Activated B cell treated with CpG ODN at 0.5 μM for 24 hours (primary cell): ENCODE measurements at regions of chr19 and their contacts with region 1.

Region 1: DNA sequence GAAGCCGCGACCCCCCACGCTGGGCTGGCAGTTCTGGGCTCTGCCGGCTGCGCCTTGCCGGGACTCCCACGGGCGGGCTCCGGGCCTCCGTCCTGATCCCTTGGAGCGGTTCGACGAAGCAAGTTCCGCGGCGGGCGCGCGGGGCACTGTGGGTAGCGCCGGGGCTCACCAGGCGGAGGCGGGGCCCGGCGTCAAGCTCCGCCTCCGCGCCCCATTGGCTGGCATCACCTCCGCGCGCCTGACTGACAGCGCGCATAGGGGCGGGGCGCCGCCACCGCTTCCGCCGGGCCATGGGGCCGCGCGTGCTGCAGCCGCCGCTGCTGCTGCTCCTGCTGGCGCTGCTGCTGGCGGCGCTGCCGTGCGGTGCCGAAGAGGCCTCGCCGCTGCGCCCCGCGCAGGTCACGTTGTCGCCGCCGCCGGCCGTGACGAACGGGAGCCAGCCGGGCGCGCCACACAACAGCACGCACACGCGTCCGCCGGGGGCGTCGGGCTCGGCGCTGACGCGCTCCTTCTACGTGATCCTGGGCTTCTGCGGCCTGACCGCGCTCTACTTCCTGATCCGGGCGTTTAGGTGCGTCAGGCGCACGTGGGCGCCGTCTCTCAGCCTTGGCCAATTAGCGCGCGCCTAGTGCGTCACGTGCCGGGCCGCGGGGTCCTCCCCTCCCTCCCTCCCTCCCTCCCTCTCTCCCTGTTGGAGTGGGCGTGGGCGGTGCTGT is at the start of gene FAM174C:
- DNase-seq: peak; percentile 87
- ATAC-seq: peak; percentile 83
- H3K4me3 Mint-ChIP-seq: peak within 1 kb of the TSS; percentile 84
- H3K27ac Mint-ChIP-seq: peak within 1 kb of the TSS; percentile 88
- H3K4me1 Mint-ChIP-seq: peaks cover 51% of the 10 kb centered on the region
- H3K27me3 Mint-ChIP-seq: no peaks in the 10 kb centered on the region
- CTCF ChIP-seq: no peak
- total RNA-seq, gene FAM174C: 47.9 and 52.0 TPM in 2 replicates

Region 2: DNA sequence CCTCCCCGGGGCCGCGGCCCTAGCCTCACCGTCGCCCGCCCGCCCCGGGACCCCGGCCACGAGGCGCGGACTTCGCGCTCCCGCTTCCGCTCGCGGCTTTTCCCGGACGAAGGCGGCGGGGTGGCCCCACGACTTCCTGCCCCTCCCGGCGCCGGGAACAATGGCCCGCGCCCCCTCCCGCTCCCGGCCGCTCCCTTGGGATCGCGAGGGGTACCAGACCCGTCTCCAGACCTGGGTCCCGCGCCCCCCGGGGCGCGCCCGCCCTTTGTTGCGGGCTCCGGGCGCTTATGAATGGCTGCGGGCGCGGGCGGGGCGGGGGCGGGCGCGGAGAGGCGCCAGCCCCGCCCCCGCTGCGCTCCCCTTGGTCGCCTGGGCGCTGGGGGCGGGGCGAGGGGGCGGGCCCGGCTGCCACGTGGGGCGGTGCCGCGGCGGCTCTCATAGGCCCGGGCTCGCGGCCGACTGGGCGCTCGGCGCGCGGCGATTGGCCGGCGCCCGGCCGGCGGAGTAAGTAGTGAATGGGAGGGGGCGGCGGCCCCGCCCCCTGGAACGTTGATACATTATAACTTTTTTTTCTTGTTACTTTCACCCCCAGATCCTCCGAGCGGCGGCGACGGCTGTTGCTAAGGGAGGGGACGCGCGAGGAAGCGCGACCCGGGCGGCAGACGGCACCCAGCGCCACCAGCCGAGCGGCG is 26.0 kb before region 1 on chr19:
- CTCF ChIA-PET with region 1: interaction called, 19 read pairs
- POLR2A ChIA-PET with region 1: interaction called, 33 read pairs
- intact Hi-C with region 1: no loop called
- DNase-seq: peak; percentile 84
- ATAC-seq: peak; percentile 49
- H3K4me3 Mint-ChIP-seq: peak overlapping the region; percentile 80
- H3K27ac Mint-ChIP-seq: peak overlapping the region; percentile 81
- H3K4me1 Mint-ChIP-seq: peaks cover 31% of the 10 kb centered on the region
- H3K27me3 Mint-ChIP-seq: no peaks in the 10 kb centered on the region
- CTCF ChIP-seq: no peak

Region 3: GRCh38 chr19:1295169-1296012 is 20.0 kb after region 1 on chr19:
- CTCF ChIA-PET with region 1: no interaction called
- POLR2A ChIA-PET with region 1: no interaction called
- intact Hi-C with region 1: no loop called
- DNase-seq: no peak
- ATAC-seq: peak; percentile 67
- H3K4me3 Mint-ChIP-seq: no peak overlapping the region
- H3K27ac Mint-ChIP-seq: no peak overlapping the region
- H3K4me1 Mint-ChIP-seq: peaks cover 9% of the 10 kb centered on the region
- H3K27me3 Mint-ChIP-seq: peaks cover 11% of the 10 kb centered on the region
- CTCF ChIP-seq: no peak

Region 4: DNA sequence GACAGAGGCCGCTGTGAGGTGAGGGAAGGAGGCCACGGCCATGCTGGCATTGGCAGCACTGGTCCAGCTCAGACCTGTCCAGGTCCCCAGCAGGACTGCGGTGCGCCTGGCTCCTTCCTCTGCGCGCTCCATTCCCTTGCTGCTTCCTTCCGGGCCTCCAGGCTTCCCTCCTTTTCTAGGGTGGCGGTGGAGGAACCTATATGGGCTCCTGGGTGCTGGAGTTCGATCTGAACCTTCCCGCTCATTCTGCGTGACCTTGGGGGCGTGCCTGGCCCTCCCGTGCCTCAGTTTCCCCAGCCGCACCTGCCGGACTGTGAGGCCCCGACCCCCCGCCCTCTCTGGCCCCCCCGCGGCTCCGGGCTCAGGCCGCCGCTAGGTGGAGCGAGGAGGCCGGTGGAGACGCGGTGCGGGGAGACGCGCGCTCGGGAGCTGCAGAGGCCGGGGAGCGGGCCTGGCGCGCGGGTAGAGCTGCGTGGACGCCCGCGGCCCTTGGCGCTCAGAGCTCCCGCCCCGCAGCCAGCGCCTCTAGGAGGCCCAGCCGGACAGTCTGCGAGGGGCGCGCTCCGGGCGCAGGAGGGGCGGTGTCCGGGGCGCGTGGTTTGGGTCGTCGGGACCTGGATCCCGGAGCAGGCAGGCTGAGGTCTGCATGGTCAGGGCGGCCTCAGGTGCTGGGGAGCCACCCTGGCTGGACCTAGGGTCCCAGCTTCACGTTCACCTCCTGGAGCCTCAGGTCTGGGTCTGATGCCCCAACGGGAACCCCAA is 40.2 kb after region 1 on chr19:
- CTCF ChIA-PET with region 1: no interaction called
- POLR2A ChIA-PET with region 1: no interaction called
- intact Hi-C with region 1: no loop called
- DNase-seq: peak; percentile 40
- ATAC-seq: peak; percentile 72
- H3K4me3 Mint-ChIP-seq: no peak overlapping the region
- H3K27ac Mint-ChIP-seq: no peak overlapping the region
- H3K4me1 Mint-ChIP-seq: no peaks in the 10 kb centered on the region
- H3K27me3 Mint-ChIP-seq: peaks cover 21% of the 10 kb centered on the region
- CTCF ChIP-seq: no peak

Region 5: GRCh38 chr19:1355568-1356507 is 80.4 kb after region 1 on chr19:
- CTCF ChIA-PET with region 1: no interaction called
- POLR2A ChIA-PET with region 1: interaction called, 3 read pairs
- intact Hi-C with region 1: loop called (anchors 5 kb)
- DNase-seq: no peak
- ATAC-seq: no peak
- H3K4me3 Mint-ChIP-seq: peak overlapping the region; percentile 86
- H3K27ac Mint-ChIP-seq: peak overlapping the region; percentile 70
- H3K4me1 Mint-ChIP-seq: peaks cover 13% of the 10 kb centered on the region
- H3K27me3 Mint-ChIP-seq: no peaks in the 10 kb centered on the region
- CTCF ChIP-seq: no peak

Region 6: GRCh38 chr19:1373534-1374249 is 98.3 kb after region 1 on chr19:
- CTCF ChIA-PET with region 1: interaction called, 27 read pairs
- POLR2A ChIA-PET with region 1: interaction called, 6 read pairs
- intact Hi-C with region 1: loop called (anchors 1 kb)
- DNase-seq: no peak
- ATAC-seq: no peak
- H3K4me3 Mint-ChIP-seq: no peak overlapping the region
- H3K27ac Mint-ChIP-seq: no peak overlapping the region
- H3K4me1 Mint-ChIP-seq: no peaks in the 10 kb centered on the region
- H3K27me3 Mint-ChIP-seq: no peaks in the 10 kb centered on the region
- CTCF ChIP-seq: no peak

Region 7: DNA sequence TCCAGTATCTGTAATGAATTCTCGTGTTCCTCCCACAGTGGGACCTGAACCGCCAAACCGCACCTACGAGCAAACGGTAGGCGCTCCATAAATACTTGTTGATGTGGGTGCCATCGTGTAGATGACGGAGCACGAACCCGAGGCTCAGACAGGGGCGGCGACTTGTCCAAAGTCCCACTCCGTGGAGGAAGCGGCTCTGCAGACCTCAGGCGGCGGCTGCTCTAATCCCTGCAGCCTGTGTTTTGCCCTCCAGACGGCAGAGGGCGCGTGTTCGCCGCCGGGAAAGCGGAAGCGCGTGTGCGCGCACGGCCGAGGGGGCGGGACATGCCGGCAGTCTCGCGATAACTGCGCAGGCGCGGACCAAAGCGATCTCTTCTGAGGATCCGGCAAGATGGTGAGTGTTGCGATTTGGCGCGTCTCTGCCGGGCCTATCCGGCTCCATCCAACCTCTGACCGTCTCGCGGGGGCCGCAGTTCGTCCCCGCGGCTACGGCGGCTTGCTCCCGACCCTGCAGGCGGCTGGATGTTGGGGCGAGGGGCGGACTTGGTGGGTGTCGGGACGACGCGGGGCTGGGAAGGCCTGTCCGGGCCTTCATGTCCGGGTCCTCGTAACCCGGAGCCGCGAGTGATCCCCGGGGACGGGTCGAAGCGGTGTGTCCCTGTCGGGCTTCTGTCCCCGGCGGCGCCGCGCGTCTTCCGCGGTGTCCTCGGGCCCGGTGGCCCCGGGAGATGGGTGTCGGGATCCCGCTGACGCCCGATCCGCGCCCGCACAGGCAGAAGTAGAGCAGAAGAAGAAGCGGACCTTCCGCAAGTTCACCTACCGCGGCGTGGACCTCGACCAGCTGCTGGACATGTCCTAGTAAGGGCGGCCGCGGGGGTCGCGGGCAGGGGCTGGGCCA is 162.9 kb after region 1 on chr19 and contains the start of gene RPS15:
- CTCF ChIA-PET with region 1: interaction called, 4 read pairs
- POLR2A ChIA-PET with region 1: no interaction called
- intact Hi-C with region 1: loop called (anchors 1 kb)
- DNase-seq: peak; percentile 94
- ATAC-seq: peak; percentile 92
- H3K4me3 Mint-ChIP-seq: peak within 1 kb of the TSS; percentile 99
- H3K27ac Mint-ChIP-seq: peak within 1 kb of the TSS; percentile 99
- H3K4me1 Mint-ChIP-seq: peaks cover 26% of the 10 kb centered on the region
- H3K27me3 Mint-ChIP-seq: no peaks in the 10 kb centered on the region
- CTCF ChIP-seq: no peak
- total RNA-seq, gene RPS15: 1,788 and 2,029 TPM in 2 replicates

Region 8: GRCh38 chr19:1812469-1813196 is 537.2 kb after region 1 on chr19:
- CTCF ChIA-PET with region 1: no interaction called
- POLR2A ChIA-PET with region 1: no interaction called
- intact Hi-C with region 1: loop called (anchors 5 kb)
- DNase-seq: peak; percentile 82
- ATAC-seq: peak; percentile 81
- H3K4me3 Mint-ChIP-seq: peak overlapping the region; percentile 96
- H3K27ac Mint-ChIP-seq: peak overlapping the region; percentile 90
- H3K4me1 Mint-ChIP-seq: peaks cover 14% of the 10 kb centered on the region
- H3K27me3 Mint-ChIP-seq: no peaks in the 10 kb centered on the region
- CTCF ChIP-seq: no peak